ENCODE measurements at regions of chr2 and their contacts with region 1.

Region 1: GRCh38 chr2:45778720-45779171 is 127.3 kb downstream of the PRKCE start:
- DNase-seq: peak; percentile 86
- H3K4me3 ChIP-seq: no peak overlapping the region
- H3K27ac ChIP-seq: no peak overlapping the region
- H3K4me1 ChIP-seq: peaks cover 0 to 23% of the 10 kb centered on the region in 2 experiments; a peak in 1 of 4 replicates
- H3K27me3 ChIP-seq: no peaks in the 10 kb centered on the region
- CTCF ChIP-seq: peak; percentile 92
- EP300 ChIP-seq: no peak
- RAD21 ChIP-seq: peak; percentile 87

Region 2: GRCh38 chr2:45439788-45440773 is 338.7 kb before region 1 on chr2:
- CTCF ChIA-PET with region 1: no interaction called
- POLR2A ChIA-PET with region 1: no interaction called
- DNase-seq: peak; percentile 28
- H3K4me3 ChIP-seq: no peak overlapping the region
- H3K27ac ChIP-seq: peak overlapping the region in 1 of 2 experiments; percentile 13; a peak in 2 of 4 replicates
- H3K4me1 ChIP-seq: peaks cover 2 to 7% of the 10 kb centered on the region in 2 experiments; a peak in 3 of 4 replicates
- H3K27me3 ChIP-seq: no peaks in the 10 kb centered on the region
- CTCF ChIP-seq: peak; percentile 52
- EP300 ChIP-seq: no peak
- RAD21 ChIP-seq: peak; percentile 52

Region 3: GRCh38 chr2:45631955-45632354 is 146.8 kb before region 1 on chr2:
- CTCF ChIA-PET with region 1: no interaction called
- POLR2A ChIA-PET with region 1: no interaction called
- DNase-seq: no peak
- H3K4me3 ChIP-seq: no peak overlapping the region
- H3K27ac ChIP-seq: no peak overlapping the region
- H3K4me1 ChIP-seq: no peaks in the 10 kb centered on the region
- H3K27me3 ChIP-seq: peaks cover 17% of the 10 kb centered on the region; the same call in 1 of the 2 replicates
- CTCF ChIP-seq: no peak
- EP300 ChIP-seq: no peak
- RAD21 ChIP-seq: no peak

Region 4: GRCh38 chr2:45650851-45651414 is 127.8 kb before region 1 on chr2:
- CTCF ChIA-PET with region 1: interaction called, 45 read pairs
- POLR2A ChIA-PET with region 1: interaction called, 3 read pairs
- DNase-seq: peak; percentile 96
- H3K4me3 ChIP-seq: peak overlapping the region; percentile 87 to 88
- H3K27ac ChIP-seq: peak overlapping the region; percentile 81 to 88
- H3K4me1 ChIP-seq: peaks cover 0 to 30% of the 10 kb centered on the region in 2 experiments; a peak in 2 of 4 replicates
- H3K27me3 ChIP-seq: no peaks in the 10 kb centered on the region
- CTCF ChIP-seq: peak; percentile 55
- EP300 ChIP-seq: peak; percentile 39 to 51; a peak in 3 of 4 replicates
- RAD21 ChIP-seq: peak; percentile 57

Region 5: DNA sequence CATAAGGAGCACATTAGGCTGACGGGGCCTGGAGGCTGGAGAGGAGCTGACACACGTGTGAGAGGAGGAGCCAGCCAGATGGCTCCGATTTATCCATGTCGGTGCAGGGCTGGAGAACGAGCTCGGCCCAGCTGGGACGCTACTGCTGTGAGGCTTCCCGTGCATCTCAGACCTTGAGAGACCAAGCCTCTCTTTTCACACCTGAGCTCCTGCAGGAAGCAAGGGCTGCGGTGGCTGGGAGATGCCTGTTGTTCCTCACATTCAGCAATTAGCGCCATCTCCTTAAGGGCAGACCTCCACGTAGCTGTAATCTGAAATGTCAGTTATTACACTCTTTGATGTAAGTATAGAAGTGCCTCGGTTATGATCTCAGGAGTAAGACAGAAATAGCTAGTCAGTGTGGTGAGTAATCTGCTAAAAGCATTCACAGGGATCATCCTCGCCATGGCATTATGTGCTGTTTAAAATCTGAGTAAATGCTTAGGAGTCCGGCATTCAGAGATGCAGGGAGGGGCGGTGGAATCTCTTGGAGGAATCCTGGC is 19.4 kb before region 1 on chr2:
- CTCF ChIA-PET with region 1: interaction called, 59 read pairs
- POLR2A ChIA-PET with region 1: no interaction called
- DNase-seq: peak; percentile 79
- H3K4me3 ChIP-seq: peak overlapping the region; percentile 29; a peak in 3 of 4 replicates
- H3K27ac ChIP-seq: peak overlapping the region in 1 of 2 experiments; percentile 69
- H3K4me1 ChIP-seq: peaks cover 17 to 42% of the 10 kb centered on the region in 2 experiments; a peak in 2 of 4 replicates
- H3K27me3 ChIP-seq: no peaks in the 10 kb centered on the region
- CTCF ChIP-seq: no peak
- EP300 ChIP-seq: peak; percentile 0 to 53; a peak in 1 of 4 replicates
- RAD21 ChIP-seq: no peak

Region 6: GRCh38 chr2:45851613-45852304 is 73.0 kb after region 1 on chr2:
- CTCF ChIA-PET with region 1: interaction called, 10 read pairs
- POLR2A ChIA-PET with region 1: no interaction called
- DNase-seq: no peak
- H3K4me3 ChIP-seq: no peak overlapping the region
- H3K27ac ChIP-seq: no peak overlapping the region; a peak in 1 of 4 replicates
- H3K4me1 ChIP-seq: peaks cover 10 to 28% of the 10 kb centered on the region in 2 experiments; a peak in 3 of 4 replicates
- H3K27me3 ChIP-seq: no peaks in the 10 kb centered on the region
- CTCF ChIP-seq: no peak
- EP300 ChIP-seq: no peak
- RAD21 ChIP-seq: no peak

Region 7: DNA sequence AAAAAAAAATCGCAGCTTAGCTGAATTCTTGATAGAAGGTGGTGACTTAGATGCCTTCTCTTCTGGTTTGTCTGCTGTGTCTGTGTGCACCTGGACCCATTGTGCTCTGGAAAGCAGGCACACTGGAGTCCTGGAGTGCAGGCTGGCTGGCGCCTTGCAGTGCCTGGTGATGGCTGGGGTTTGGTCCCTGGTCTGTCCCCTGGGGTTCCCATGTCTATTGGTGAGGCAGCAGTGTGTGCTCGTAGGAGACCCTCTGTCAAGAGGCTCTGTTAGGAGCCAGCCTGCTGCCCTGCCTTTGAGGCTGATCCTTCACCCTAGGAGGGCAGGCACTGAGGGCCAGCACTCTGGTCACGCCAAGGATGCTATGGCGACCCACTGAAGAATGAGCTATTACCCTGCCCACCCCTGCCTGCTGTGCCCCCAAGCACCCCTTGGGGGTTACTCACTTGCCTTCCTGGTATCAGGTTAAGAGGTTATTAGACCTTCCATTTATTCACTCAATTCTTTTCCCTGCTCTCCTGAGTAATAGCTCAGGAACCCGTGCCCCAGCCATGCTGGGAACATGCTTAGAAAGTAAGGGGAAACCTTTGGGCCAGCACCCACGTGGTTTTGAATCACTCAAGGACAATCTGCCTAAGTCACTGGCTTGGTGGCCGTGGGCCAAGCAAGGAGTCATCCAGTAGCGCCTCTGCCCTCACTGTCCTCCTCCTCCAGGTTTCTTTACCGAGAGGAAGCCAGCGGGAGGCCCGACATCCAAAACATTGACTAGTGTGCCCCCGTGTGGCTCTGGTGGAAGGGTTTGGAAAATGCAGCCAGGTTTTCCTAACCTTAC is 157.3 kb after region 1 on chr2:
- CTCF ChIA-PET with region 1: interaction called, 34 read pairs
- POLR2A ChIA-PET with region 1: no interaction called
- DNase-seq: peak; percentile 88
- H3K4me3 ChIP-seq: no peak overlapping the region
- H3K27ac ChIP-seq: peak overlapping the region in 1 of 2 experiments; percentile 57; a peak in 2 of 4 replicates
- H3K4me1 ChIP-seq: peaks cover 7 to 17% of the 10 kb centered on the region in 2 experiments; a peak in 2 of 4 replicates
- H3K27me3 ChIP-seq: no peaks in the 10 kb centered on the region
- CTCF ChIP-seq: peak; percentile 93
- EP300 ChIP-seq: peak; percentile 8 to 74; a peak in 1 of 4 replicates
- RAD21 ChIP-seq: peak; percentile 99

Region 8: DNA sequence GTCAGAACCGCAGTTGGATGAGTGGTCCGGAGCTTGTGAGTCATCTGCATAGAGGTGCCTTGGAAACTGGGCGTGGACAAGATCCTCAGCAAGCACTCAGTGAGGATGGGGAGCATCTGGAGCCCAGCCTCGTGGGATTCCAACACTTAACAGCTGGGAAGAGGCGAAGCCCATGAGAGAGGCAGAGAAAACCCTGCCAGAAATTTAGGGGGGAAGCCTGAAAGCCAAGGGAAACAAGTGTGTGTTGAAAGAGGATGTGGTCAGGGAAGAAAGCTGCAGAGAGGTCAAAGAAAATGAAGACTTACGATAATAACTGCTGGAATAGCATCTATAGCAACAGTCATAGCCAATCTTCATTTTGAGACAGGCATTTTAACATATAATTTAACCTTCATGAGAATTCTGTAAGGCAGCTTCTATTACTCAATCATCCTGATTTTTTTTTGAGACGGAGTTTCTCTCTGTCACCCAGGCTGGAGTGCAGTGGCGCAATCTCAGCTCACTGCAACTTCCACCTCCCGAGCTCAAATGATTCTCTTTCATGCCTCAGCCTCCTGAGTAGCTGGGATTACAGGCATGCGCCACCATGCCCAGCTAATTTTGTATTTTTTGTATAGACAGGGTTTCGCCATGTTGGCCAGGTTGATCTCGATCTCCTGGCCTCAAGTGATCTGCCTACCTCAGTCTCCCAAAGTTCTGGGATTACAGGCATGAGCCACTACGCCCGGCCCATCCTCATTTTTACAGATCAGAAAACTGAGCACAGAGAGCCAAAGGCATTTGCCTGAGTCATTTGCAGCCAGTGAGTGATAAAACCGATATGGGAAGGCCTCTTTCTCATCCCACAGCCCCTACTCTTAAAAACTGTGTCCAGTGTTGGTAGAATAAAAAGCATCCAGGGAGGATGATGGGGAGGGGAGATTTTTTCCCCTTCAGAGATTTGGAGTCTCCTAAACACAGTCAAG is 304.1 kb after region 1 on chr2:
- CTCF ChIA-PET with region 1: no interaction called
- POLR2A ChIA-PET with region 1: no interaction called
- DNase-seq: no peak
- H3K4me3 ChIP-seq: no peak overlapping the region
- H3K27ac ChIP-seq: no peak overlapping the region
- H3K4me1 ChIP-seq: peaks cover 0 to 2% of the 10 kb centered on the region in 2 experiments; a peak in 1 of 4 replicates
- H3K27me3 ChIP-seq: no peaks in the 10 kb centered on the region
- CTCF ChIP-seq: no peak
- EP300 ChIP-seq: no peak
- RAD21 ChIP-seq: no peak

Measured in SK-N-SH (cell line).